ENCODE measurements at regions of chr12 and their contacts with region 1.

Region 1: GRCh38 chr12:121095544-121096198 is 37.0 kb upstream of the P2RX7 start:
- DNase-seq: peak; percentile 85
- H3K4me3 Mint-ChIP-seq: peak overlapping the region; percentile 71
- H3K27ac Mint-ChIP-seq: no peak overlapping the region
- H3K4me1 Mint-ChIP-seq: peaks cover 33% of the 10 kb centered on the region
- H3K27me3 Mint-ChIP-seq: peaks cover 6% of the 10 kb centered on the region

Region 2: DNA sequence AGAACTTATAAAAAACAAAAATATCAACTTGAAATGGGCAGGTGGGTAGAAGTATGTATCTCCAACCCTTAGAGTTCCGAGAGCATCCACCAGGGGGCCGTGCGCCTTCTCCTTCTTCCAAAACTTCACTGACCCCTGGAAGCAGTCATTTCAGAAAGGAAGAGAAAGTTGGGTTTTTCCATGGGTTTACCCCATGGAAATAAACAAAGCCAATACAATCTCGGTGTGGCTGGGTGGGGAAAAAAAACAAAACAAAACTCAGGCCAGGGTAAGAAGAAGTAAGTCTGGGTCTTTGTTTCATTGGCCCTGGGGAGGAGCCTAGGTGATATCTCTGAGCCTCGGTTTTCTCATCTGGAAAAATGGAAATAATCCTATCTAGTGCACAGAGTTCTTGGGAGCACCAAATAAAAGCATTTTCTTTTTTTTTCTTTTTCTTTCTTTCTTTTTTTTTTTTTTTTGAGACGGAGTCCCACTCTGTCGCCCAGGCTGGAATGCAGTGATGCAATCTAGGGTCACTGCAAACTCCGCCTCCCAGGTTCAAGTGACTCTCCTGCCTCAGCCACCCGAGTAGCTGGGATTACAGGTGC is 150.9 kb before region 1 on chr12:
- CTCF ChIA-PET with region 1: interaction called, 7 read pairs
- intact Hi-C with region 1: loop called (anchors 1 kb)
- DNase-seq: peak; percentile 85
- H3K4me3 Mint-ChIP-seq: no peak overlapping the region
- H3K27ac Mint-ChIP-seq: no peak overlapping the region
- H3K4me1 Mint-ChIP-seq: peaks cover 6% of the 10 kb centered on the region
- H3K27me3 Mint-ChIP-seq: no peaks in the 10 kb centered on the region

Region 3: GRCh38 chr12:121005346-121005815 is 90.3 kb before region 1 on chr12:
- CTCF ChIA-PET with region 1: interaction called, 7 read pairs
- intact Hi-C with region 1: loop called (anchors 1 kb)
- DNase-seq: peak; percentile 76
- H3K4me3 Mint-ChIP-seq: no peak overlapping the region
- H3K27ac Mint-ChIP-seq: no peak overlapping the region
- H3K4me1 Mint-ChIP-seq: no peaks in the 10 kb centered on the region
- H3K27me3 Mint-ChIP-seq: no peaks in the 10 kb centered on the region